ENCODE measurements at regions of chr1 and their contacts with region 1.

Region 1: DNA sequence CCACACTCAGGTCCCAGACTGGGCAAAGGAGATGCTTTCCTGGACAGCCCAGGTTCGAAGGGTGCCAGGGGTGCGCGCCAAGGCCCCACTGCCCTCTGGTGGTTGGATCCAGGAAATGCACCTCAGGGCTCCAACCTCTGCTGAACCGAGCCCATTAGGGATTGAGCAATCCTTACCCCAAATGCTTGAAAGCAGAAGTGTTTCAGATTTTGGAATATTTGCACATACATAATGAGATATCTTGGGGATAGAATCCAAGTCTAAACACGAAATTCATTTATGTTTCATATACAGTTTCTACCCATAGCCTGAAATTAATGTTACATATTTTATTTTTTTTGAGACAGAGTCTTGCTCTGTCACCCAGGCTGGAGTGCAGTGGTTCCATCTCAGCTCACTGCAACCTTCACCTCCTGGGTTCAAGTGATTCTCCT is 57.4 kb downstream of the SLC9A1 start:
- DNase-seq: peak; percentile 65
- ATAC-seq: peak; percentile 85
- H3K4me3 ChIP-seq: no peak overlapping the region
- H3K27ac ChIP-seq: no peak overlapping the region
- H3K4me1 ChIP-seq: peaks cover 13% of the 10 kb centered on the region
- H3K27me3 ChIP-seq: no peaks in the 10 kb centered on the region
- CTCF ChIP-seq: peak; percentile 98

Region 2: GRCh38 chr1:27057801-27058625 is 39.5 kb before region 1 on chr1:
- CTCF ChIA-PET with region 1: interaction called, 19 read pairs
- POLR2A ChIA-PET with region 1: interaction called, 15 read pairs
- in situ Hi-C with region 1: no loop called
- intact Hi-C with region 1: no loop called
- DNase-seq: no peak
- ATAC-seq: peak; percentile 72
- H3K4me3 ChIP-seq: no peak overlapping the region
- H3K27ac ChIP-seq: no peak overlapping the region
- H3K4me1 ChIP-seq: no peaks in the 10 kb centered on the region
- H3K27me3 ChIP-seq: no peaks in the 10 kb centered on the region
- CTCF ChIP-seq: no peak

Region 3: GRCh38 chr1:27392096-27392777 is 294.7 kb after region 1 on chr1 and contains the start of gene GPR3:
- CTCF ChIA-PET with region 1: no interaction called
- POLR2A ChIA-PET with region 1: no interaction called
- in situ Hi-C with region 1: no loop called
- intact Hi-C with region 1: no loop called
- DNase-seq: no peak
- ATAC-seq: peak; percentile 96
- H3K4me3 ChIP-seq: peak within 1 kb of the TSS; percentile 65 to 71
- H3K27ac ChIP-seq: peak within 1 kb of the TSS; percentile 69
- H3K4me1 ChIP-seq: peaks cover 6% of the 10 kb centered on the region
- H3K27me3 ChIP-seq: no peaks in the 10 kb centered on the region
- CTCF ChIP-seq: peak; percentile 86
- total RNA-seq, gene GPR3: 0.95 TPM

Measured in Panc1 (cell line).